ENCODE measurements at regions of chr1 and their contacts with region 1.

Region 1: DNA sequence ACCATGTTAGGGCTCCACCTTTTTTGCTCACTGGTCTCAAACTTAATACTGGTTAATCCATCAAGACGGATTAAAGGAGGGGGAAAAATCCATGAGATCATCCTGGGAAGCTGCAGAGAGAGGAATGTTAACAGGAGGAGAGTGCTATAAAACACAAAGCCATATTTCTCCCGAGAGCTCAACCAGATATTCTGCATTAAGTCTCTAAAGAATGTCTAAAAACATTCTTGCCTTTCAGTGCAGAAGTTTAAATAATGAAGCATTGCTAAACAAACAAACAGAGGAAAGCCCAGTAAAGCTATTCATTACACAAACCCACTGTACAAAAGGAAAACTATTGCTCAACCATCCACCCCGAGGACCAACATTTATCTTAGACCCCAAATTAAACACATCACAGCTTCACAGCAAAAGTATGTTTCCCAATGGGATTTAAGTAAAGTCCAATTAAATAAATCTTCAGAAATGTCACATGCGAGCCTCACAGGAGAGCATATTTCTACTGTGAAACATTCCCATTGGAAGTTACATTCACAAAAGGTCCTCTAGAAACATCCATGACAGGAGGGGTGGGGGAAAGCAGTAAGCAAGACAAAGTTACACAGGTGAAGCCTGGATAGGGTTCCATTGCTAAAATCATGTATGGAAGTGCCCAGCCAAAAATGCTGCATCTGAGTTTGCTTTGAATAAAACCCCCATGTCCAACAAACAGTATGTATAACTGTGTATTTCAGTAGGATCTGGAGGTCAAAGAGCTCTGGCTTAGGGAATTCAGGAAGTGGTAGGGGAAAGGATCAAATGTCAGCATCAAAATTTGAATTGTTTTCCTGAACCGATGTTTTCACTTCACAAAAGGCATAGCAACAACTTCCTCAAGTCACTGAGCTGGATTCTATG is 23.3 kb downstream of the DUSP10 start:
- DNase-seq: peak; percentile 9 to 89
- H3K4me3 ChIP-seq: peak overlapping the region; percentile 14; the same call in 1 of the 2 replicates
- H3K27ac ChIP-seq: peak overlapping the region; percentile 62
- H3K4me1 ChIP-seq: peaks cover 53% of the 10 kb centered on the region
- H3K27me3 ChIP-seq: no peaks in the 10 kb centered on the region
- CTCF ChIP-seq: no peak

Region 2: GRCh38 chr1:221606256-221606655 is 112.4 kb before region 1 on chr1:
- CTCF ChIA-PET with region 1: no interaction called
- POLR2A ChIA-PET with region 1: interaction called, 3 read pairs
- intact Hi-C with region 1: loop called (anchors 1 kb)
- DNase-seq: no peak
- H3K4me3 ChIP-seq: no peak overlapping the region
- H3K27ac ChIP-seq: 0 out of 2 replicates have a peak overlapping the region, but pooled peaks have one; percentile 44
- H3K4me1 ChIP-seq: peaks cover 51% of the 10 kb centered on the region
- H3K27me3 ChIP-seq: no peaks in the 10 kb centered on the region
- CTCF ChIP-seq: no peak

Region 3: DNA sequence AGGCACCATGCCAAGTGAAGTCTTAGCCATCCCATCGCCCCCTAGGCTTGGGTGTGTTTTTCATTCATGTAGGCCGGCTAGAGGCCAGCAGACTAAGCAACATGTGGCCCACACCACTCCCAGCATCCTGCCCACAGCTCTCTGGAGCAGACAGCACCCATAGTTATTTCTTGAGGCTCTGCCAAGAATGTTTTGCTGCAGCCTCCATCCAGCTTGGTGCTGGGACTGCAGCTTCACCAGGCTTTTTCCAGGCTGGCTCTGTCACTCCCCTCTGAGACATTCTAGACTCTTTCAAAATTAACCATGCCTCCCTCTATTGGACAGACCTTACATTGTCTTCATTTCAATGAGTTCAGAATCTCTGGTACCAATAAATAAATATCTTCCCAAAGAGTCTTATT is 81.0 kb before region 1 on chr1:
- CTCF ChIA-PET with region 1: no interaction called
- POLR2A ChIA-PET with region 1: no interaction called
- intact Hi-C with region 1: no loop called
- DNase-seq: no peak
- H3K4me3 ChIP-seq: no peak overlapping the region
- H3K27ac ChIP-seq: no peak overlapping the region
- H3K4me1 ChIP-seq: no peaks in the 10 kb centered on the region
- H3K27me3 ChIP-seq: no peaks in the 10 kb centered on the region
- CTCF ChIP-seq: no peak

Region 4: DNA sequence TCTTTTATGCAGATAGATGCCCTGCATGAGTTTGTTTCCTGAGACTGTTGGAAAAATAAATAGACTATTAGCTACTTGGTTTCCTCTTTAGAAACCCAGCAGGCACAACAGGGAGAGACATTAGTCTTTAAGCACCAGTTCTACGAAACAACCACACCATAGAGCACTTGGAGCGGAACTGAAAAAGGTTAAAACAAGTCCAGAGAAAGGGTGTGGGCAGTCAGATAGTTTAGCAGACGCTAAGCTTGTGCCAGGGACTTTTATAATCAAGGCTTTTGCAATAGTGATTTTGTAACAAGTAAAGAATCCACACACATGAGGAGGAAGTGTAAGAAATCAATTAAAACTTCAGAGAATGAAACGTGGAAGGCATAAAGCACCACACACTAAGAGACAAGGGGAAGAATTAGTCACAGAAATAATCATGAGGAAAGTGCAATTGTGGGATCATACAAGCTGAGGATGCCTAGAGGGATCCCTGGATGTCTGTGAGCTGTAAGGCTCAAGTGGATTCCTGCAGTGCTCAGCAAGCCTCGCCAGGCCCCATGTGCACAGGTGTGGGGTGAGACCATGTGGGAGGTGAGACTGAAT is 1462.2 kb after region 1 on chr1:
- CTCF ChIA-PET with region 1: no interaction called
- POLR2A ChIA-PET with region 1: interaction called, 16 read pairs
- intact Hi-C with region 1: no loop called
- DNase-seq: peak in 1 of 2 experiments; percentile 94
- H3K4me3 ChIP-seq: no peak overlapping the region
- H3K27ac ChIP-seq: peak overlapping the region; percentile 68
- H3K4me1 ChIP-seq: peaks cover 36% of the 10 kb centered on the region
- H3K27me3 ChIP-seq: no peaks in the 10 kb centered on the region
- CTCF ChIP-seq: no peak

Measured in PC-9 (cell line).